ENCODE measurements at regions of chr2 and their contacts with region 1.

Region 1: GRCh38 chr2:44955593-44956392 is 14.3 kb downstream of the SIX3 start:
- DNase-seq: peak; percentile 86
- H3K4me3 Mint-ChIP-seq: peak overlapping the region; percentile 78
- H3K27ac Mint-ChIP-seq: no peak overlapping the region
- H3K4me1 Mint-ChIP-seq: peaks cover 7% of the 10 kb centered on the region
- H3K27me3 Mint-ChIP-seq: peaks cover 89% of the 10 kb centered on the region
- CTCF ChIP-seq: peak; percentile 82

Region 2: DNA sequence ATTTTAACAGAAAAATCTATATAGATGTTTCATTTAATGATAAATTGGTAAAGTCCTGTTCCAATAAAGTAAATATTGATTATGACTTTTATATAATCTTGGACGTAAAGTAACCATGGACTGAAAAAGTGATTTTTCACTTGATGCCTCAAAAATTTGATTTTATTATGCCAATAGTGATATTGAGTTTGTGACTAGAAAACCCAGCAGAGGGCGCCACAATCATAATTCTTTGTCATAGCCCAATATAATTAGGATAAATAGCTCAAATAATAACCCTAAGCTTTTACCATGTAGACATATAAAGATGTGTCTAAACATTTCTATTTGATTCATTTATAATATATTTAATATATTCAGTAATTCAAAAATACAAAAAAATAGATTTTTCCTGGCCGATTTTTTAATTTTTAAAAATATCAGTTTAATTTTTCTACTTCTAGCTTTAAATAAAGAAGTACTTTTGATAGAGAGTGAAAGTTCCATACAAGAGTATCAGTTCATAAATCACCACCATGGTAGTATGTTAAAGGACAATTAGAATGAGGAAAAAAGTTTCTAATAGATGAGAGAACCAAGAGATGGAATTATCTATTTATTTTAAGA is 563.4 kb before region 1 on chr2:
- CTCF ChIA-PET with region 1: interaction called, 17 read pairs
- intact Hi-C with region 1: loop called (anchors 2 kb)
- DNase-seq: peak; percentile 54
- H3K4me3 Mint-ChIP-seq: no peak overlapping the region
- H3K27ac Mint-ChIP-seq: no peak overlapping the region
- H3K4me1 Mint-ChIP-seq: peaks cover 9% of the 10 kb centered on the region
- H3K27me3 Mint-ChIP-seq: no peaks in the 10 kb centered on the region
- CTCF ChIP-seq: no peak

Region 3: GRCh38 chr2:44479122-44479887 is 476.5 kb before region 1 on chr2:
- CTCF ChIA-PET with region 1: interaction called, 45 read pairs
- intact Hi-C with region 1: loop called (anchors 1 kb)
- DNase-seq: peak; percentile 55
- H3K4me3 Mint-ChIP-seq: no peak overlapping the region
- H3K27ac Mint-ChIP-seq: no peak overlapping the region
- H3K4me1 Mint-ChIP-seq: no peaks in the 10 kb centered on the region
- H3K27me3 Mint-ChIP-seq: no peaks in the 10 kb centered on the region
- CTCF ChIP-seq: peak; percentile 92

Region 4: GRCh38 chr2:44560352-44560751 is 395.4 kb before region 1 on chr2:
- CTCF ChIA-PET with region 1: interaction called, 11 read pairs
- intact Hi-C with region 1: loop called (anchors 1 kb)
- DNase-seq: peak; percentile 54
- H3K4me3 Mint-ChIP-seq: no peak overlapping the region
- H3K27ac Mint-ChIP-seq: no peak overlapping the region
- H3K4me1 Mint-ChIP-seq: peaks cover 18% of the 10 kb centered on the region
- H3K27me3 Mint-ChIP-seq: no peaks in the 10 kb centered on the region
- CTCF ChIP-seq: peak; percentile 15

Region 5: DNA sequence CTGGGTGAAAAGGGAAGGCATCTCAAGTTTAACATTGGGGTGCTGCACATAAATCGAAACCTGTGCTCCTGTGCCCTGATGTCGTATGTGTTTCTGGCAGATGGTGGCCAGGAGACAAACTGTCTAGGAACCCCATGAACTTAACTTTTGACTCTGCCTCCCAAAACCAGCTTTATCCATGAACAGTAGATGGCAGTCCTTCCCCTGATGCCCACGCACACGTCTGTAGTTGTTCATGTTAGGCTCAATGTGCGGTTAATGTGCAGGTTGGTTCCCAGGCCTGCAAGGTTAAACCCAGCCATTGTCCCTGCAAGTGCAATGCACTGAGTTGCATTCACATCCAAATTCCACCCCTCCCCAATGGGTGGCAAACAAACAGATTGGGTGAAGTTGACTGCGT is 58.4 kb before region 1 on chr2:
- CTCF ChIA-PET with region 1: interaction called, 33 read pairs
- intact Hi-C with region 1: loop called (anchors 1 kb)
- DNase-seq: peak; percentile 9
- H3K4me3 Mint-ChIP-seq: no peak overlapping the region
- H3K27ac Mint-ChIP-seq: no peak overlapping the region
- H3K4me1 Mint-ChIP-seq: no peaks in the 10 kb centered on the region
- H3K27me3 Mint-ChIP-seq: peaks cover 54% of the 10 kb centered on the region
- CTCF ChIP-seq: no peak

Region 6: DNA sequence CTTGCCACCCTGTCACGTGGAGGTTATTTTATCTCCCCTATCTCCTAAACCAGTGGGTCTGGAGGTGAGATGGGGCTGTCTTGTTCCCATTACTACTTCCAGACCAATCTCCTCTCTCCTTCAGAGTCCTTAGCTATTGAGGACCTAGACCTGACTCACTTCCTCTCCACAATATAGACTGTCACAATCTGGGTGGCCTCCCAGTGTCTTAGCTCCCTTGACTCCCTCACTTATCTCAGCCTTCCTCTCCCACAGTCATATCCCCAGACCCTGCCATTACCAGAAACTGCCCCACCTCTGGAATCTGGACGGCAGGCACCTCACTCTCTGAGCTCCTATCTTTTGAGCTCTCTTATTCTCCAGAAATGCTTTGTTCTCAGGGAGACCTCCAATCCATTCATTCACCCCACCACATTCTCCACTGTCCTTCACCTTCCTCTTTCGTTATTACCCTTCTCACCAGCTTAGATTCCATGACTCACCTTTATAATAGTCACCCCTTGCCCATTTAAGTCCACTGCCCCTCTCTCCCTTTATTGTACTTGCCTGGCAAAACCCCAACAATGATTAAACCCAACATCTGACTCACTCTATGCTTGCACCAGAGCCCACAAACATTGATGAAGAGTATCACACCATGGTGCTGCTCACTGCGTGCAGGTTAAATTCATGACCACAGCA is 37.6 kb before region 1 on chr2:
- CTCF ChIA-PET with region 1: interaction called, 12 read pairs
- intact Hi-C with region 1: no loop called
- DNase-seq: peak; percentile 69
- H3K4me3 Mint-ChIP-seq: peak overlapping the region; percentile 7
- H3K27ac Mint-ChIP-seq: peak overlapping the region; percentile 72
- H3K4me1 Mint-ChIP-seq: peaks cover 32% of the 10 kb centered on the region
- H3K27me3 Mint-ChIP-seq: peaks cover 6% of the 10 kb centered on the region
- CTCF ChIP-seq: no peak